ENCODE measurements at regions of chr3 and their contacts with region 1.

Region 1: DNA sequence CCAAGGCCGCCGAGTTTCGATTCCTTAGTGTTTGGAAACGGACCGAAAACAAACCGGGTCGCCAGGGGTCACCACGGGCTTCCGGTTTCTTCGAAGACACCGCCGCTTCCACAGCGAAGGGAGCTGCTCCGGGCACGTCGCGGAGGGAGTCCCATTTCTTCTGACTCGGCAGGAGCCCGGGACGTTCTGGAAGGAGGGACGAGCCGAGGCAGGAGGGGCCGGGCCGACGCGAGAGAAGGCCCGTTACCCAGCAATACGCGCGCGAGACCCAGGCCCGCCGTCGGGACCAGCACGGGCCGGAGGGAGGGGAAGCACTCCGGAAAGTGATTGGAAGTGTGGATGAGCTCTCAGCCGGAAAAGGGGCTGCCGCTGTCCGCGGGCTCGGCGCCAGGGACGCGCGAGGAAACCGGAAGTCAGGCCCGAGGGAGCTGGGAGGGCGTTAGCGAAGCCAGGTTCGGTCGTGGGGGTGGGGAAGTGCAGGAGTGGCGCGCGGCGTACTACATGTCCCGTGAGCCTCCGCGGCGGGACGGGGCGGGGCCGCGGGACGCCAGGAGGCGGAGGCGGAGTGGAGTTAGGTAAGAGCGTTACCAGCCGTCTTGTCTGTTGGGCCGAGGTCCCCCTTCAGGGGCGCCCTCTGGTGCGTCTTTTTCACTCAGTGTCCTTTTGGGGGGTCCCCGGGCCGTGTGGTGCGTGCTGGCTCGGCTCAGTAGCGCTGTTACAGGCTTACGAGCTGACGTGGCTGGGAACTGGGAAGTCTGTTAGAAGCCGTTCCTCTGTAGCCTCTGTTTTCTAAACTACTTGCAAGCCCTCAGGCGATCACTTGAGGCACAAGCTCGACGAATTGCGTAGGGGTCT is at the starts of genes AZI2 and ZCWPW2:
- DNase-seq: peak; percentile 90 to 96
- ATAC-seq: peak; percentile 82 to 96 (median 87)
- H3K4me3 ChIP-seq: peak within 1 kb of the TSS; percentile 97
- H3K4me3 Mint-ChIP-seq: peak within 1 kb of the TSS; percentile 95
- H3K27ac ChIP-seq: peak within 1 kb of the TSS; percentile 98
- H3K27ac Mint-ChIP-seq: peak within 1 kb of the TSS; percentile 93 to 95
- H3K4me1 ChIP-seq: peaks cover 9% of the 10 kb centered on the region
- H3K4me1 Mint-ChIP-seq: peaks cover 40 to 43% of the 10 kb centered on the region in 2 donors
- H3K27me3 ChIP-seq: no peaks in the 10 kb centered on the region
- H3K27me3 Mint-ChIP-seq: no peaks in the 10 kb centered on the region
- CTCF ChIP-seq: no peak
- total RNA-seq, gene AZI2: 29.3 to 38.6 (median 32.0) TPM
- total RNA-seq, gene ZCWPW2: 0.43 TPM in 1 of 3 donors, not detected in the others

Region 2: GRCh38 chr3:27484015-27484844 is 864.6 kb before region 1 on chr3 and contains the start of gene SLC4A7:
- intact Hi-C with region 1: loop called (anchors 5 kb)
- DNase-seq: peak; percentile 98 to 99
- ATAC-seq: peak; percentile 91 to 99 (median 93)
- H3K4me3 ChIP-seq: peak within 1 kb of the TSS; percentile 87
- H3K4me3 Mint-ChIP-seq: peak within 1 kb of the TSS; percentile 100
- H3K27ac ChIP-seq: peak within 1 kb of the TSS; percentile 71
- H3K27ac Mint-ChIP-seq: peak within 1 kb of the TSS; percentile 93 to 96
- H3K4me1 ChIP-seq: peaks cover 39% of the 10 kb centered on the region
- H3K4me1 Mint-ChIP-seq: peaks cover 35 to 38% of the 10 kb centered on the region in 2 donors
- H3K27me3 ChIP-seq: no peaks in the 10 kb centered on the region
- H3K27me3 Mint-ChIP-seq: no peaks in the 10 kb centered on the region
- CTCF ChIP-seq: no peak
- total RNA-seq, gene SLC4A7: 36.4 to 48.0 (median 41.3) TPM

Region 3: GRCh38 chr3:28241221-28242160 is 107.4 kb before region 1 on chr3 and contains the start of gene CMC1:
- intact Hi-C with region 1: loop called (anchors 2 kb)
- DNase-seq: peak; percentile 77 to 93
- ATAC-seq: peak; percentile 80 to 91 (median 87)
- H3K4me3 ChIP-seq: peak within 1 kb of the TSS; percentile 90
- H3K4me3 Mint-ChIP-seq: peak within 1 kb of the TSS; percentile 96
- H3K27ac ChIP-seq: peak within 1 kb of the TSS; percentile 72
- H3K27ac Mint-ChIP-seq: peak within 1 kb of the TSS; percentile 7 to 88
- H3K4me1 ChIP-seq: peaks cover 28% of the 10 kb centered on the region
- H3K4me1 Mint-ChIP-seq: peaks cover 41 to 46% of the 10 kb centered on the region in 2 donors
- H3K27me3 ChIP-seq: no peaks in the 10 kb centered on the region
- H3K27me3 Mint-ChIP-seq: peaks cover 2 to 8% of the 10 kb centered on the region in 2 donors
- CTCF ChIP-seq: no peak
- total RNA-seq, gene CMC1: 122 to 157 (median 136) TPM

Region 4: GRCh38 chr3:28295898-28296490 is 52.9 kb before region 1 on chr3:
- intact Hi-C with region 1: loop called (anchors 5 kb)
- DNase-seq: peak in 1 of 2 donors; percentile 19
- ATAC-seq: peak; percentile 28 to 31 (median 29)
- H3K4me3 ChIP-seq: peak overlapping the region; percentile 72
- H3K4me3 Mint-ChIP-seq: peak overlapping the region; percentile 92
- H3K27ac ChIP-seq: peak overlapping the region; percentile 94
- H3K27ac Mint-ChIP-seq: peak overlapping the region; percentile 94 to 95
- H3K4me1 ChIP-seq: peaks cover 9% of the 10 kb centered on the region
- H3K4me1 Mint-ChIP-seq: peaks cover 61 to 72% of the 10 kb centered on the region in 2 donors
- H3K27me3 ChIP-seq: no peaks in the 10 kb centered on the region
- H3K27me3 Mint-ChIP-seq: no peaks in the 10 kb centered on the region
- CTCF ChIP-seq: no peak